ENCODE measurements at regions of chr2 and their contacts with region 1.

Region 1: DNA sequence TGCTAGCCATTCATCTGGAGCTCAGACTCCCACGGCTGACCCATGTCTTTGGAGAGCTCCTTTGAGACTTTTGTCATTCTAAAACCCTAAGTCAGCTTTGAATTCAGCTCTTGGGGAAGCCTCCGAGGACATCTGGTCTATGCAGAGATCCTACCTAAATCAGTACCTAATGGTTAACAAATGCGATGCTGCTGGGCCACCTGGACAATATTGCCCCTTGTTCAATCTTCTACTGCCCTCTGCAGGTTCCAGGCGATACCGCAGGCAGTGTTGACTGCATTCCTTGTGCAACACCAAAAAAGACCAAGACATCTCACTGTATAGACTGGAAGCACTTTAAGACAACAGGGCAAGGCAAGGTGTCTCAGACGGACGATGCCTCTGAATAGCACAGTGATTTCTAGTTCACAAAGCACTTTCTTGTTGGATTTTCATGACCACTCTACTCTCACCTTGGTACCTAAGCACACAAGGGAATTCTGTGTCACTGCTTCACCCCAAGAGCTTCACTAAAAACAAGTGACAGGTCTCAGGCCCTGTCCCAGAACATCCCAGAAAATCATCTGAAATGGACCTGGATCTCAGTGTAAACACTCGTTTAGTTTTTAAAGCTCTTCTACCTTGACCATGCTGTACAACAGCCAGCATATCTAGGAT is 80.9 kb downstream of the XDH start:
- DNase-seq: no peak

Region 2: GRCh38 chr2:30178618-30179434 is 1154.8 kb before region 1 on chr2:
- intact Hi-C with region 1: loop called (anchors 10 kb)
- DNase-seq: no peak

Region 3: DNA sequence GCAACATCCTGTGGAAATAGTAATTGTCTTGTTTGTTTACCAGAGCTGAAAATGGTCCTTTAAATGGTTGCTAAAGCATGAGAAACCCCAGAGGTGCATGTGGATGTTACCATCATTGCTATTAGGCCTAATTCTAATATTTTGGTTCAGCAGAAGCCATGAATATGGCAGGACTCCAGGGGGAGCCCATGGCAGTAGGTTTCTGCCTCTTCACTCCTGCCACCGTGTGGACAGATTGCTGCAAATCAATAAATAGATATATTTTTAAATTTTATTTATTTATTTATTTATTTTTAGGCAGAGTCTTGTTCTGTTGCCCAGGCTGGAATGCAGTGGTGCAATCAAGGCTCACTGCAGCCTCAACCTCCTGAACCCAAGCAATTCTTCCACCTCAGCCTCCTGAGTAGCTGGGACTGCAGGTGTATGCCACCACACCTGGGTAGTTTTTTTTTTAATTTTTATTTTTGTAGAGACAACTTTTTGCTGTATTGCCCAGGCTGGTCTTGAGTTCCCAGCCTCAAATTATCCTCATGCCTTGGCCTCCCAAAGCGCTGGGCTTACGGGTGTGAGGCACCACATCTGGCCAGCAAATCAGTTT is 471.5 kb before region 1 on chr2:
- intact Hi-C with region 1: loop called (anchors 2 kb)
- DNase-seq: no peak

Region 4: DNA sequence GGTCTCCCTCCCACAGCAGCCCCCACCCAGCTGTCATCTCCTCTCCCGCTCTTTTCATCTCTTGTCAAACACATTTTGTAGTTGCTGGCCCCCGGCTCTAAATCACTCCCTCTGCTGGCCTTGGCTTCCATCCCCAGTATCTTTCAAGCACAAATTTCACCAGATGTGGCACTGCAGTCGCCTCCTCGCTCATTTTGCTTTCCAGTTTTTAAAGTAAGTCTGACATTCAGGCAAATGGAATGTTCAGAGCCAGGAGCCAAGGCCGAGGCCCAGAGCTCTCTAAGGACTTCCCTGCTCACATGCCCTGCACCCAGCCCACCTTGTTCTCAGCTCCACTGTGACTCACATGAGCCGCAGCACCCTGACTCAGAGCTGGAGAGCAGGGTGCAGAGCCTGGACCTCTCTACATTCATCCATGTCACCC is 353.8 kb before region 1 on chr2:
- intact Hi-C with region 1: loop called (anchors 10 kb)
- DNase-seq: no peak

Region 5: DNA sequence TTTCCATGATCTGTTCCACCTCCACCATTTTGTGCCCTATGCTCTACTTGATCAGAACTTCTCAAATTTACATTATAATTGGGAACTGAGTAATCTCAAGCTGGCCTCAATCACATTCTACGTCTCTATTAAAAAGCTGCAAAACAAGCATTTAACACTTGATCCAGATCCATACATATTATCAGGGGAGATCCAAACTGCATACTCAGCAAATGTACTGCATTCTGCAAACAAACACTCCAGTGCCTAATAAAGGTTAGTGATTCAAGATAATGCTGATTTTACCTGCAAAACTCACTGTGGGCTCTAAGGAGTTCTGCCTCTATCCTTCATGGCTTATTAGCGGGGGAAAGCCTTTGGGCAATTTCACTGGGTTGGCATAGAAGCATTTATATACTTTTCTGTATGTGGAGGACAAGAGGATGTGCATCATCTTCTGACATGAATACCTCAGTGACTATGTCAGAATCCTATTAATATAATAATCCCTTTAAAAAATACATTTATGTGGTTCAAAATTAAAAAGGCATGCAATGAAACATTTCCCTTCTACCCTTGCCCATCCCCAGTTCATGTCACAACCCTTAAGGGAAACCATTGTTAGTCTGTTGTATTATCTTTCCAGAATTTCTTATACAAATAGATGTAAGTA is 235.6 kb before region 1 on chr2:
- intact Hi-C with region 1: no loop called
- DNase-seq: no peak

Region 6: GRCh38 chr2:31170071-31170698 is 163.5 kb before region 1 on chr2:
- intact Hi-C with region 1: loop called (anchors 1 kb)
- DNase-seq: peak; percentile 82

Region 7: GRCh38 chr2:31233741-31234682 is 99.6 kb before region 1 on chr2 and contains the start of gene EHD3:
- intact Hi-C with region 1: loop called (anchors 2 kb)
- DNase-seq: peak; percentile 94
- total RNA-seq, gene EHD3: 26.6 TPM

Region 8: GRCh38 chr2:31401580-31401979 is 67.9 kb after region 1 on chr2:
- intact Hi-C with region 1: no loop called
- DNase-seq: no peak